ENCODE measurements at regions of chr14 and their contacts with region 1.

Region 1: DNA sequence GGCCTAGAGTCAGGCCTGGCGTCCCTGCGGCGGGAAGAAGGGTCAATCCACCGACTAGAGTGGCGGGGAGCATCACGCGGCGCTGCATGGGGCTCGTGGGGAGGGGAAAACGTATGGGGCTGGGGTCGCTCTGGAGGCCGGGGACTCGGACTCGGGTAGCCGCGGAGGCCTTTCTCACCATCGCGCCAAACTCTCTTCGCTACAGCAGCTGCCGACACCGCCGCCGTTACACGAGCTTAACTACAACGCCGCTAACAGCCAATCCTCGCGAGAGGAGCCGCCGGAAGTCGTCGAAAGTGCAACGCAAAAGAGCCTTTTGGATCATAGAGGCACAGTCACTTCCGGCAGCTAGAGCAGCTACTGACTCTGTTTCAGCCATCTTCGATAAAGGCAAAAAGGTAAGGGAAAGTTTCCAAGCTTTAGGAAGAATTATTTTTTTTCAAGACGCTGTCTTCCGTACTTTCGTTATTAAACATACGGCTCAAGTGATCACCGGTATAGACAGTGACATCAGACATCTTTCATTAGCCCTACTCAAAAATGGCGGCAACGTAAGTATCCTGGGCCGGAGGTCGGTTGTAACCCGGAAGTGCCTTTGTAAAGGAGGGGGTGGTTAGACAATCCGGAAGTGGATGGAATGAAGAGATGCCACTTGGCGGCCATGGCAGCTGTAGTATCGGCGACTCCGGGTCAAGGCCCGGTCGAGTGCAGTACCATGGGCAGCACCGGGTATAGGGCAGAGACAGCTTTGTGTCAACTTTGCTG is at the starts of genes ERH and SLC39A9:
- DNase-seq: peak; percentile 83
- ATAC-seq: peak; percentile 85
- H3K4me3 Mint-ChIP-seq: peak within 1 kb of the TSS; percentile 89
- H3K27ac Mint-ChIP-seq: peak within 1 kb of the TSS; percentile 96
- H3K4me1 Mint-ChIP-seq: peaks cover 64% of the 10 kb centered on the region
- H3K27me3 Mint-ChIP-seq: no peaks in the 10 kb centered on the region
- CTCF ChIP-seq: no peak
- total RNA-seq, gene ERH: 252 and 273 TPM in 2 replicates
- total RNA-seq, gene SLC39A9: 46.4 and 54.5 TPM in 2 replicates

Region 2: DNA sequence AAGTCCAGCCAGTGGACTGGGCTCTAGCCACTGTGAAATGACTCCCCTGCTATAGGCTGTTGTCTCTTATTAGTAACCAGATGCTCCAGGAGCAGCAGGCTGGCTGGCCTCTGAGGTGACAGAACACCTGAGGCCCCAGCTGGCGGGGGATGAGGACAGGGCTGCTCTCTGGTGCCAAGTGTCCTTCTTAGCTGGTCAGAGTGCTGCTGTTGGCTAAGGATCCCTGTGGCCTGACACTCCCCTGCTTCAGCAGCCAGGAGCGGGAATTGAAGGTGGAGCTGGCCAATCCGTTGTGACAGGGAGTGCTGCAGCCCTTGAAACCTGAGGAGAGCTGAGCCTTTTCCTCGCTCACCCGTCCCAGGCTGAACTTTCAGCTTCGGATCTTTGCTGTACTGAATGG is 1940.5 kb before region 1 on chr14:
- CTCF ChIA-PET with region 1: no interaction called
- POLR2A ChIA-PET with region 1: no interaction called
- intact Hi-C with region 1: no loop called
- DNase-seq: no peak
- ATAC-seq: no peak
- H3K4me3 Mint-ChIP-seq: no peak overlapping the region
- H3K27ac Mint-ChIP-seq: no peak overlapping the region
- H3K4me1 Mint-ChIP-seq: no peaks in the 10 kb centered on the region
- H3K27me3 Mint-ChIP-seq: peaks cover 7% of the 10 kb centered on the region
- CTCF ChIP-seq: no peak

Region 3: GRCh38 chr14:67816326-67817002 is 1581.8 kb before region 1 on chr14 and contains the start of gene ZFYVE26:
- CTCF ChIA-PET with region 1: no interaction called
- POLR2A ChIA-PET with region 1: interaction called, 3 read pairs
- intact Hi-C with region 1: loop called (anchors 2 kb)
- DNase-seq: peak; percentile 70
- ATAC-seq: peak; percentile 85
- H3K4me3 Mint-ChIP-seq: peak within 1 kb of the TSS; percentile 94
- H3K27ac Mint-ChIP-seq: peak within 1 kb of the TSS; percentile 95
- H3K4me1 Mint-ChIP-seq: peaks cover 63% of the 10 kb centered on the region
- H3K27me3 Mint-ChIP-seq: no peaks in the 10 kb centered on the region
- CTCF ChIP-seq: no peak
- total RNA-seq, gene ZFYVE26: 40.7 and 41.1 TPM in 2 replicates

Region 4: GRCh38 chr14:69191340-69192111 is 206.7 kb before region 1 on chr14 and contains the start of gene EXD2:
- CTCF ChIA-PET with region 1: no interaction called
- POLR2A ChIA-PET with region 1: interaction called, 6 read pairs
- intact Hi-C with region 1: loop called (anchors 1 kb)
- DNase-seq: peak; percentile 58
- ATAC-seq: peak; percentile 84
- H3K4me3 Mint-ChIP-seq: peak within 1 kb of the TSS; percentile 93
- H3K27ac Mint-ChIP-seq: peak within 1 kb of the TSS; percentile 83
- H3K4me1 Mint-ChIP-seq: peaks cover 16% of the 10 kb centered on the region
- H3K27me3 Mint-ChIP-seq: peaks cover 3% of the 10 kb centered on the region
- CTCF ChIP-seq: no peak
- total RNA-seq, gene EXD2: 5.2 and 6.9 TPM in 2 replicates

Region 5: GRCh38 chr14:69354383-69355153 is 43.7 kb before region 1 on chr14:
- CTCF ChIA-PET with region 1: interaction called, 3 read pairs
- POLR2A ChIA-PET with region 1: interaction called, 30 read pairs
- intact Hi-C with region 1: loop called (anchors 1 kb)
- DNase-seq: peak; percentile 60
- ATAC-seq: peak; percentile 88
- H3K4me3 Mint-ChIP-seq: peak overlapping the region; percentile 86
- H3K27ac Mint-ChIP-seq: peak overlapping the region; percentile 99
- H3K4me1 Mint-ChIP-seq: peaks cover 52% of the 10 kb centered on the region
- H3K27me3 Mint-ChIP-seq: no peaks in the 10 kb centered on the region
- CTCF ChIP-seq: no peak

Region 6: GRCh38 chr14:69428289-69428998 is 30.2 kb after region 1 on chr14:
- CTCF ChIA-PET with region 1: no interaction called
- POLR2A ChIA-PET with region 1: interaction called, 17 read pairs
- intact Hi-C with region 1: loop called (anchors 2 kb)
- DNase-seq: no peak
- ATAC-seq: peak; percentile 89
- H3K4me3 Mint-ChIP-seq: no peak overlapping the region
- H3K27ac Mint-ChIP-seq: peak overlapping the region; percentile 74
- H3K4me1 Mint-ChIP-seq: peaks cover 35% of the 10 kb centered on the region
- H3K27me3 Mint-ChIP-seq: no peaks in the 10 kb centered on the region
- CTCF ChIP-seq: no peak

Region 7: GRCh38 chr14:69460093-69460701 is 62.0 kb after region 1 on chr14:
- CTCF ChIA-PET with region 1: interaction called, 19 read pairs
- POLR2A ChIA-PET with region 1: interaction called, 18 read pairs
- intact Hi-C with region 1: loop called (anchors 1 kb)
- DNase-seq: peak; percentile 27
- ATAC-seq: peak; percentile 92
- H3K4me3 Mint-ChIP-seq: no peak overlapping the region
- H3K27ac Mint-ChIP-seq: no peak overlapping the region
- H3K4me1 Mint-ChIP-seq: no peaks in the 10 kb centered on the region
- H3K27me3 Mint-ChIP-seq: no peaks in the 10 kb centered on the region
- CTCF ChIP-seq: no peak

Region 8: GRCh38 chr14:70359181-70360090 is 961.2 kb after region 1 on chr14 and contains the start of gene COX16:
- CTCF ChIA-PET with region 1: no interaction called
- POLR2A ChIA-PET with region 1: no interaction called
- intact Hi-C with region 1: loop called (anchors 1 kb)
- DNase-seq: peak; percentile 72
- ATAC-seq: peak; percentile 93
- H3K4me3 Mint-ChIP-seq: peak within 1 kb of the TSS; percentile 99
- H3K27ac Mint-ChIP-seq: peak within 1 kb of the TSS; percentile 92
- H3K4me1 Mint-ChIP-seq: peaks cover 42% of the 10 kb centered on the region
- H3K27me3 Mint-ChIP-seq: peaks cover 2% of the 10 kb centered on the region
- CTCF ChIP-seq: no peak
- total RNA-seq, gene COX16: 48.8 and 50.7 TPM in 2 replicates